Panc1 (cell line): ENCODE measurements at regions of chr7 and their contacts with region 1.

Region 1: GRCh38 chr7:106736508-106737201 is 75.7 kb upstream of the CCDC71L start:
- DNase-seq: peak; percentile 57
- ATAC-seq: peak; percentile 88
- H3K4me3 ChIP-seq: no peak overlapping the region
- H3K27ac ChIP-seq: no peak overlapping the region
- H3K4me1 ChIP-seq: no peaks in the 10 kb centered on the region
- H3K27me3 ChIP-seq: no peaks in the 10 kb centered on the region
- CTCF ChIP-seq: peak; percentile 72

Region 2: DNA sequence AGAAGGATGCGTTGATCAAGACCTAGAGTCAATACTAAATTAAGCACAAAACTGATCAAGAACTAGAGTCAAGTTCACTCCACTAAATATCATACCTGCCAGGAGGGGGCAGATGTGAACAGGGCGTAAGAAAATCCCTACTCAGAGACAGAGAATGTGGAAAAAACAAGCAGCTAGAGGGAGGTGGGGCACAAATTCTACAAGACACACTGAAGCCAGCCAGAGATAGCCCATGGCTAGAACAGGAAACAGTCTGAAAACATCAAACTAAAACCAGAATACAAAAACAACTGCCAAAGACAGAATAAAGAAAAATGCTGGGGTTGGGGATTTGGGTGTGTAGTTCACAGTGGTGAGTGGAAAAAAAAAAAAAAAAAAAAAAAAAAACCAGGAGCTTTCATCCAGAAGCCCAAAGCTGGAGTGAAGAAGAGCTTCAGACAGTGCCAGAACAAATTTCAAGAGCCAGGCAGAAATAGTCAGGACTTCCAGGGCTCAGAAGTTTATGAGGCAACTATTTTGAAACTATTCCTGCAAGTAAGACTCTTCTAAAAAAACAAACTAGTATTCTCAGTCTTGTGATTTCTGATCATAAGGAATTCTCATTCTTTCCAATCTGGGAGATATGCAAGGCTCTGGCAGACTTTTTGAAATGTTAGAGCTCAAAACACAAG is 194.0 kb before region 1 on chr7:
- CTCF ChIA-PET with region 1: no interaction called
- POLR2A ChIA-PET with region 1: no interaction called
- in situ Hi-C with region 1: no loop called
- intact Hi-C with region 1: loop called (anchors 1 kb)
- DNase-seq: peak; percentile 42
- ATAC-seq: peak; percentile 78
- H3K4me3 ChIP-seq: no peak overlapping the region
- H3K27ac ChIP-seq: no peak overlapping the region
- H3K4me1 ChIP-seq: no peaks in the 10 kb centered on the region
- H3K27me3 ChIP-seq: no peaks in the 10 kb centered on the region
- CTCF ChIP-seq: peak; percentile 71

Region 3: GRCh38 chr7:107025449-107026103 is 288.9 kb after region 1 on chr7:
- CTCF ChIA-PET with region 1: no interaction called
- POLR2A ChIA-PET with region 1: no interaction called
- in situ Hi-C with region 1: no loop called
- intact Hi-C with region 1: no loop called
- DNase-seq: no peak
- ATAC-seq: no peak
- H3K4me3 ChIP-seq: no peak overlapping the region
- H3K27ac ChIP-seq: no peak overlapping the region
- H3K4me1 ChIP-seq: no peaks in the 10 kb centered on the region
- H3K27me3 ChIP-seq: no peaks in the 10 kb centered on the region
- CTCF ChIP-seq: no peak